Panc1 (cell line): ENCODE measurements at regions of chr14 and their contacts with region 1.

Region 1: DNA sequence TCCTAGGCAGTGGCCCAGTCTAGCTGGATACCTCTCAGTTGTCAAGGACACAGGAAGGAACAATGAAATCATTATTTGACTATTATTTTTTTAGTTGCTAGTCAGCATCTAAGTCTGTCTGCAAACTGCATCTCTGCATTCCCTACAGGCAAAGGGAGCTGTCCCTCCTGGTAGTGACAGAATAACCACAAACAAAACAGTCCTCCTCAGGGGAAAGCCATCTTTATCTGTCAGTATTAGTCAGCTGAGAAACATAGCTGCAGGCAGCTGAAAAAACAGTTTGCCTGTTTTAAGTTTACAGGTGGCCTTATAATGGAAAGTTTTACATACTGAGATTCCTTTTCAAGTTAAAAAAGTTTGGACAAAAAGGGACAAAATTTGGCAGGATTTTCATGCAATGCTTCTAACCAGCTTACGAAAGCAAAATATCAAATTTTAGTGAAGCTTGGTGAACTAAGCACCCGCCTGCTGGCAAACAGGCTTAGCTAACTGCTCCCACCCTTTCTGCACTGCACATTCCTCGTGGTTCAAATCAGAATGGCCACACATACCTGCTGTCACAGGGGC is 29.5 kb downstream of the SLC25A21 start:
- DNase-seq: no peak
- ATAC-seq: peak; percentile 83
- H3K4me3 ChIP-seq: no peak overlapping the region
- H3K27ac ChIP-seq: no peak overlapping the region
- H3K4me1 ChIP-seq: peaks cover 11% of the 10 kb centered on the region; the same call in 1 of the 2 replicates
- H3K27me3 ChIP-seq: no peaks in the 10 kb centered on the region
- CTCF ChIP-seq: no peak

Region 2: GRCh38 chr14:36661756-36662498 is 481.0 kb before region 1 on chr14 and contains the start of gene PAX9:
- CTCF ChIA-PET with region 1: no interaction called
- POLR2A ChIA-PET with region 1: no interaction called
- in situ Hi-C with region 1: no loop called
- intact Hi-C with region 1: loop called (anchors 10 kb)
- DNase-seq: peak; percentile 74
- ATAC-seq: peak; percentile 99
- H3K4me3 ChIP-seq: peak within 1 kb of the TSS; percentile 54 to 69
- H3K27ac ChIP-seq: no peak within 1 kb of the TSS
- H3K4me1 ChIP-seq: no peaks in the 10 kb centered on the region
- H3K27me3 ChIP-seq: no peaks in the 10 kb centered on the region
- CTCF ChIP-seq: no peak
- total RNA-seq, gene PAX9: 0.82 TPM

Region 3: GRCh38 chr14:36941783-36942521 is 201.0 kb before region 1 on chr14:
- CTCF ChIA-PET with region 1: no interaction called
- POLR2A ChIA-PET with region 1: no interaction called
- in situ Hi-C with region 1: no loop called
- intact Hi-C with region 1: loop called (anchors 10 kb)
- DNase-seq: peak; percentile 64
- ATAC-seq: peak; percentile 87
- H3K4me3 ChIP-seq: no peak overlapping the region
- H3K27ac ChIP-seq: no peak overlapping the region
- H3K4me1 ChIP-seq: no peaks in the 10 kb centered on the region
- H3K27me3 ChIP-seq: no peaks in the 10 kb centered on the region
- CTCF ChIP-seq: peak; percentile 93

Region 4: GRCh38 chr14:36996133-36996856 is 146.6 kb before region 1 on chr14:
- CTCF ChIA-PET with region 1: no interaction called
- POLR2A ChIA-PET with region 1: no interaction called
- in situ Hi-C with region 1: no loop called
- intact Hi-C with region 1: loop called (anchors 10 kb)
- DNase-seq: no peak
- ATAC-seq: no peak; the same call in 1 of the 2 replicates
- H3K4me3 ChIP-seq: no peak overlapping the region
- H3K27ac ChIP-seq: no peak overlapping the region
- H3K4me1 ChIP-seq: no peaks in the 10 kb centered on the region
- H3K27me3 ChIP-seq: no peaks in the 10 kb centered on the region
- CTCF ChIP-seq: no peak

Region 5: GRCh38 chr14:37116933-37117849 is 25.7 kb before region 1 on chr14:
- CTCF ChIA-PET with region 1: no interaction called
- POLR2A ChIA-PET with region 1: no interaction called
- in situ Hi-C with region 1: no loop called
- intact Hi-C with region 1: no loop called
- DNase-seq: peak; percentile 59
- ATAC-seq: peak; percentile 91
- H3K4me3 ChIP-seq: no peak overlapping the region
- H3K27ac ChIP-seq: peak overlapping the region; percentile 69; the same call in 1 of the 2 replicates
- H3K4me1 ChIP-seq: peaks cover 2% of the 10 kb centered on the region
- H3K27me3 ChIP-seq: no peaks in the 10 kb centered on the region
- CTCF ChIP-seq: peak; percentile 61; the same call in 1 of the 2 replicates